ENCODE measurements at regions of chr4 and their contacts with region 1.

Region 1: GRCh38 chr4:40699648-40700047 is 50.1 kb upstream of the NSUN7 start:
- DNase-seq: no peak
- H3K4me3 Mint-ChIP-seq: peak overlapping the region; percentile 7
- H3K27ac Mint-ChIP-seq: peak overlapping the region; percentile 74
- H3K4me1 Mint-ChIP-seq: peaks cover 34% of the 10 kb centered on the region
- H3K27me3 Mint-ChIP-seq: no peaks in the 10 kb centered on the region

Region 2: DNA sequence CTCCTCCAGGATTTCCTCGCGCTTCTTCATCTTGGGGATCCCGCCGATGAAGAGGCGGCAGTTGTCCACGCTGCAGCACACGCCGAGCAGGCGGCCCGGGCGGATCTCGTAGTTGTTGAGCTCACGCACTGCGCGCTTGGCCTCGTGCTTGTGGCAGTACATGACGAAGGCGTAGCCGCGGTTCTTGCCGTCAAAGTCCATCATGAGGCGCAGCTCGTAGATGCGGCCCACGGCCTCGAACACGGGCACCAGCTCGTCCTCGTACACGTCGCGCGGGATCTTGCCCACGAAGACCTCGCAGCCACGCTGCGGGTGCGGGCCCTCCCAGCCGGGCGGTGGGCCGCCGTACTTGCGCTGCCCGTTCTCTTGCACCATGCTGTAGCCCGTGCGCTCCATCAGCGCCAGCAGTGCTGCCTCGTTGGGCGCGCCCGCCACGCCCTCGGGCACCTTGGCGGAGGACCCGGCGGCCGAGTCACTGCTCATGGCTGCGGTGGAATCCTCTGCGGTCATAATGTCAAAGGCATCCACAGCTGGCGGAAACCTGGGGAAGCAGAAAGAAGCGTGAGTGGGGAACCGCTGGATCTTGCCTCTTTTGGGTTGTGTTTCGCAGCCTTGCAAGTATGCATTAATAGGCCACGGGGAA is 261.1 kb before region 1 on chr4:
- intact Hi-C with region 1: loop called (anchors 1 kb)
- DNase-seq: no peak
- H3K4me3 Mint-ChIP-seq: peak overlapping the region; percentile 3
- H3K27ac Mint-ChIP-seq: peak overlapping the region; percentile 8
- H3K4me1 Mint-ChIP-seq: peaks cover 54% of the 10 kb centered on the region
- H3K27me3 Mint-ChIP-seq: no peaks in the 10 kb centered on the region

Region 3: DNA sequence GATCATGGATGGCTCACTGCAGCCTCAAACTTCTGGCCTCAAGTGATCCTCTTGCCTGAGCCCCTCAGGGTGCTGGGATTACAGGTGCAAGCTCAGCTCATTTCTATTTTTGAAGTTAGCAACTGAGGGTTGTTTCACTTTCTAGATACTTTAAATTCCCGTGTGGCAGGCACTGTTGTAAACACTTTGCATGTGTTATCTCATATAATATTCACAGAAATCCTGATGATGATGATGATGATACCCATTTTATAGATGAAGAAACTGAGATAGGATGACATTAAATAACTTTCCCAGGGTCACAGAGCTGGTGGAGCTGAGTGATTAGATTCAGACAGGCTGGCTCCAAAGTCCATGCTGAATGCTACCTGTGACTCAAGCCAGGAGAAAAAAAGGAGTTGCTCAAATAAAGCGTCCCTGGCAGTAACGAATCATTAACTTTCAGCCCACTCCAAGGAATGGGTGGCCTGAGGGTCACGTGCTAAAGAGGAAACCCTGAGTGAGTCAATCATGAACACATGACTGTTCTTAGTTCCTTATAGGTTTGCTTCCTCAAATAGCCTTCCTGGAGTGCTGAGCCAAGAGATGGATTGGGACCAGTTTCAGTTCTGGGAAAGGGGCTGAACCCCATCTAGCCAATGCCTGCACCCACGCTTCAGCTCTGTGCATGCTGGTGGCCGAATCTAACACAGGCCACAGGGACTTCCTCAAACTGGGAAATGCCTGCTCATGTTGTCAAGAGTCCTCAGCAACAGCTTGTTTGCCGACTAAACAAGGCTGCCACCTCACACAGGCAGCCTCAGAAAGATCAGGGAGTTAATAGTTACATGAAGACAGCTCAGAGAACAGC is 122.8 kb before region 1 on chr4:
- intact Hi-C with region 1: loop called (anchors 5 kb)
- DNase-seq: no peak
- H3K4me3 Mint-ChIP-seq: peak overlapping the region; percentile 35
- H3K27ac Mint-ChIP-seq: peak overlapping the region; percentile 74
- H3K4me1 Mint-ChIP-seq: peaks cover 57% of the 10 kb centered on the region
- H3K27me3 Mint-ChIP-seq: peaks cover 2% of the 10 kb centered on the region

Region 4: DNA sequence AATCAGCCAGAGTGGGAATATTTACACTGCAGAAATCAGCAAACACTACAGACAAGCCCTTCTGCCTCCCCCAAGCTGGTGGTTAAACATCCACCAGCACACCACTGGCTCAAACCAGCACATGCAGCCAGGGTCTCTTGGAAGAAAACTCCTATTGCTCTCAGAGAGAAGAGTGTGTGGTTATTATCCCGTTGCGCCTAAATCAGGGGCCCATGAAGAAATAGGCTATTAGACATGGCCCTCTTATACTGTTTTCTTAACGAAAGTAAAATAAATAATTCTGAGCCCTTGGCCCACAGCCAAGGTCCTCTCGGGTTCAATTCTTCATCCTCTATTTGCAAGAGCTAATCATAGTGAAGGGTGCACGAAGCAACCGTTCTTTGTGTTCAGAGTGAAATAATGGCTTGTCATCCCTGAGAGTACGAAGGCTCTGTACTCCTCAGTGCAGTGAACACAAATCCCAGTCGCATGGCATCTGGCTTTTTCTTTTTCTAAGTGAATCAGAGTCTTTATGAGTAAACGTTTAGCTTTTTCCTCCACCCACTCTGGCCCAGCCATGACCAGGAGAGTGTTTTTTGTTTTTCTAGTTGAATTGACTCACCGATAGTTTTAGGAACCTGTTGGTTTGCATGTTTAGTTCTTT is 36.6 kb before region 1 on chr4:
- intact Hi-C with region 1: loop called (anchors 1 kb)
- DNase-seq: no peak
- H3K4me3 Mint-ChIP-seq: no peak overlapping the region
- H3K27ac Mint-ChIP-seq: peak overlapping the region; percentile 81
- H3K4me1 Mint-ChIP-seq: peaks cover 31% of the 10 kb centered on the region
- H3K27me3 Mint-ChIP-seq: peaks cover 1% of the 10 kb centered on the region

Region 5: DNA sequence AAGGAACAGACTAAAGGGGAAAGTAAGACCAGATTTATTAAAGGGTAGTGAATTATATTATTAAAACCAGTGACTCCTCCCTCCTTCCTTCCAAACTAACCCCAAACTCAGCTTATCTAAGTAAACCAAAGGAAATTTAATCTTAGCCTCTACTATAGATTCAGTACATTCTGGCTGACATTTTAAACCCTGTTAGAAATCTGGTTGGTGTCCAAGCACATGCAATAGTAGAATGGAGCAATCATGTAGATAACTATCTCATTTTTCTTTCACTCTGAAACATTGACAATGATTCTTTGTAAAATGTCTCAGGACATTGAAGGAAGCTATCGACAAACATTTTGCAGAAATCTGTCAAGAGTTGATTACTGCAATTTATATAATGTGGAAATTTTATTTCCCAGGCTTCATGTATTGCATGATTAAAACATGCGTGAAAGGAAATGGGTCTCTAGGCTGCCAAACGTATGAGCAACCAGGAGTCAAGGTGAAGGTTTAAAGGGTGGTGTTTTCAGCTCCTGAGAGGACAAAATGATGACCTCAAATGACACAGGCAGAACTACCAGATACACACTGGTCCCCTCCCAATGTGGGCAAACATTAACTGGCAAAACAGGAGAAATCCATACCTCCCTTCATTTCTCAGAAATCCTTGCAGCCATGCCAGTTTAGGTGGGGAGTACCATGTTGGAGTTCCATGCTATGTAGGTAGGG is 11.8 kb before region 1 on chr4:
- intact Hi-C with region 1: loop called (anchors 1 kb)
- DNase-seq: no peak
- H3K4me3 Mint-ChIP-seq: peak overlapping the region; percentile 56
- H3K27ac Mint-ChIP-seq: peak overlapping the region; percentile 97
- H3K4me1 Mint-ChIP-seq: peaks cover 27% of the 10 kb centered on the region
- H3K27me3 Mint-ChIP-seq: peaks cover 2% of the 10 kb centered on the region

Region 6: DNA sequence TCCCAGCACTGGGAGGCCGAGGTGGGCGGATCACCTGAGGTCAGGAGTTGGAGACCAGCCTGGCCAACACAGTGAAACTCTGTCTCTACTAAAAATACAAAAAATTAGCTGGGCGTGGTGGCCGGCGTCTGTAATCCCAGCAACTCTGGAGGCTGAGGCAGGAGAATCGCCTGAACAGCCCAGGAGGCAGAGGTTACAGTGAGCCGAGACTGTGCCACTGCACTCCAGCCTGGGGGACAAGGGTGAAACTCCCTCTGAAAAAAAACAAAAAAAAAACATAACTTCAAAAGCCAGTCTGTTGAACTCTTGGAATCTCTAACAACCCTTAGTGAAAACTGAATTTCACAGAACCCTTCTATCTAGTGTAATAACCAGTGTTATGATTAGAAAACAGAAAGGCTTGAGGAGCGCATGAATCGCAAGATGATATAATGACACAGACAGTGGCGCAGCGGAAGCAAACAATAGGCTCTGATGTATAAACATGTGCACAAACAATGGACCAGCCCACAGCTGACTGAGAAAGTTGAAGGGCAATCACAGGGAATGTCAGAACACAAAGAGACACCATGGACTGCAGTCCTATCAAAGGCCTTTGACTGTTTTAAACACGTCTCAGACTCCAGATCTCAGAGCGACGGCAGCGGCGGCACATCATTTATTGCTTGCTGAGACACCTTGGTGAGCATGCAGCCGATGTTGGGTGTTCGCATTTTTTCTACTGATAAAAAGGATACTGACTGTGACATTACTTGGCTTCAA is 131.7 kb after region 1 on chr4:
- intact Hi-C with region 1: no loop called
- DNase-seq: no peak
- H3K4me3 Mint-ChIP-seq: no peak overlapping the region
- H3K27ac Mint-ChIP-seq: no peak overlapping the region
- H3K4me1 Mint-ChIP-seq: no peaks in the 10 kb centered on the region
- H3K27me3 Mint-ChIP-seq: peaks cover 6% of the 10 kb centered on the region

Region 7: DNA sequence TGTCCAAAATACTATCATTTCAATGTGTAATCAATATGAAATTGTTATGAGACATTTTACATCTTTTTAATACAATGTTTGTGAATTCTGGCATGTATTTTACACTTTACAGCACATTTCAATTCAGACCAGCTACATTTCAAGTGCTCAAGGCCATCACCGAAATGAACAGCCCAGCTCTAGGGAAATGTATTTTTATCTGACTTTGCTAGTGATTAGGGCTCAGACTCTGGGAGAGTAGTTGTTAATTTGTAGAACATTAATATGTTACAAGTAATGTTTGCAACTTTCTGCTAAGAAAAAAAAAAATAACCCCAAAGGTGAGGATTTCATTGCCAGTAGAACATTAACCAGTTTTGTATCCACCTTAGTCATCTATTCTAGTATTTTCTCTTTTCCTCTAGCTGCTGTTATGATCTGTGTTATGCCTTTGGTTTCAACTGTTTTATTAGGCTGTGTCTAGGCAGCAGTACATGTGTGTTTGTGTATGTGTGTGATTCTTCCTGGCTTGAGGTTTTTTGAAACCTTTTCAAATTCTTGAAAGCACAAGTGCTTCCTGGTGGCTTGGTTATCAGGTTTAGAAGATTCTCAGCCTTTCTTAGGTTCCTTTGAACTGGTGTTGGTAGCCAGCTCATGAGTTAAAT is 176.0 kb after region 1 on chr4:
- intact Hi-C with region 1: no loop called
- DNase-seq: no peak
- H3K4me3 Mint-ChIP-seq: no peak overlapping the region
- H3K27ac Mint-ChIP-seq: no peak overlapping the region
- H3K4me1 Mint-ChIP-seq: no peaks in the 10 kb centered on the region
- H3K27me3 Mint-ChIP-seq: peaks cover 8% of the 10 kb centered on the region

Measured in activated T-helper 1 cell treated with anti-CD3 and anti-CD28 coated beads, Interleukin-12 subunit alpha, Interleukin-12 subunit beta, Interleukin-2, Interleukin-4 antibody, amounts not matched to agents 30 ng/mL and 10 ng/mL and 1 ng/mL, durations not matched to agents 14 hours and 24 hours and 36 hours (primary cell).